Dendritic cell treated with granulocyte-macrophage colony-stimulating factor and Interleukin-4, amounts not matched to agents 40 ng/mL and 50 ng/mL, for 4 days (primary cell): ENCODE measurements at regions of chr3 and their contacts with region 1.

Region 1: DNA sequence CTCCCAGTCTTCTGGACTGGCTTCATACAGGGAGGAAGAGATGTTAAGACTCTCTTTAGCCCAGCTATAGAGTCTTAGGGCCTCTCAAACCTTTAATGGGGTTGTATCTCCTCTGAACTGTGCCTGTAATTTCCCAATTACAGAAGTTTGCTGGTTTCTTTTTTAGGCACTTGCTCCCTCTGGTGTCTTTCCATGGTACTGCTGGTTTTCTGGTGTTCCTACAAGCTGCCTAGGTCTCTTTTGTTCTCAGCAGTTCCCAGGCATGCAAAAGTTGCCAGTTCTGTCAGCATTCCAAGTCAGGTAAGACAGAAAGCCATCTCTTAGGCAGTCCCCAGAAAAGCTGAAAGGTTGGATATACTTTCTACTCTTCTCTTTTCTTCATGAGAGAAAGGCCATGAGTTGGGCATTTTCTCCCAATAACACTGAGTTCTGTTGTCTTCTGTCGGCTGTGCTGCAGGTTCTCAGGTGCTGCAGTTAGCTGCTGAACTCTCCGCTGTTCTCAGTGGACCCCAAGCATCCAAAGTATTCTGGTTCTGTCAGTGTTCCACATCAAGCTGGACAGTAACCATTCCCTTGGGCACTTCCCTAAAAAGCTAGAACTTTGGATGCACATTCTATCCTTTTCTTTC is 54.4 kb upstream of the EHHADH start:
- H3K4me3 Mint-ChIP-seq: no peak overlapping the region
- H3K27ac Mint-ChIP-seq: no peak overlapping the region
- H3K4me1 Mint-ChIP-seq: peaks cover 28% of the 10 kb centered on the region
- H3K27me3 Mint-ChIP-seq: no peaks in the 10 kb centered on the region

Region 2: DNA sequence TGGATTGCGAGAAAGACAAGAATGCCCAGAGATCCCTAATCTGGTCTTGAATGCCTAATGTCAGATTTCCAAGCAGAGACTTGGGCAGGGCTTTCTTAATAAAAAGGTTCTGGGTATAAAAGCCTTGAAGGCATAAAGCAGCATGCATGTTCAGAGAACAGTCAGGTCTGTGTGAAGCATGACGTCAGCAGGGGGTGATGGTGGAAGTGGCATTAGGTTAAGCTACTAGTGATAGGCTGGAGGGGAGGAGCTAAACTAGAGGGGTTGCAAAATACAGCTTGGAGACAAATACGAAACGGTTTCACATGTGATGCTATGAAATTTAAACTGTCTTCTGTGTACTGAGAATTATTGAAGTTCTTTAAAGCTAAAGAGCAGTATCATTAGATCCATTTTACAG is 370.6 kb before region 1 on chr3:
- intact Hi-C with region 1: loop called (anchors 10 kb)
- H3K4me3 Mint-ChIP-seq: no peak overlapping the region
- H3K27ac Mint-ChIP-seq: no peak overlapping the region
- H3K4me1 Mint-ChIP-seq: no peaks in the 10 kb centered on the region
- H3K27me3 Mint-ChIP-seq: no peaks in the 10 kb centered on the region

Region 3: GRCh38 chr3:185330238-185330637 is 22.0 kb after region 1 on chr3:
- intact Hi-C with region 1: loop called (anchors 2 kb)
- H3K4me3 Mint-ChIP-seq: peak overlapping the region; percentile 27
- H3K27ac Mint-ChIP-seq: peak overlapping the region; percentile 93
- H3K4me1 Mint-ChIP-seq: peaks cover 37% of the 10 kb centered on the region
- H3K27me3 Mint-ChIP-seq: no peaks in the 10 kb centered on the region

Region 4: GRCh38 chr3:185353823-185354614 is 45.8 kb after region 1 on chr3:
- intact Hi-C with region 1: no loop called
- H3K4me3 Mint-ChIP-seq: no peak overlapping the region
- H3K27ac Mint-ChIP-seq: no peak overlapping the region
- H3K4me1 Mint-ChIP-seq: no peaks in the 10 kb centered on the region
- H3K27me3 Mint-ChIP-seq: peaks cover 5% of the 10 kb centered on the region